ENCODE measurements at regions of chr1 and their contacts with region 1.

Region 1: DNA sequence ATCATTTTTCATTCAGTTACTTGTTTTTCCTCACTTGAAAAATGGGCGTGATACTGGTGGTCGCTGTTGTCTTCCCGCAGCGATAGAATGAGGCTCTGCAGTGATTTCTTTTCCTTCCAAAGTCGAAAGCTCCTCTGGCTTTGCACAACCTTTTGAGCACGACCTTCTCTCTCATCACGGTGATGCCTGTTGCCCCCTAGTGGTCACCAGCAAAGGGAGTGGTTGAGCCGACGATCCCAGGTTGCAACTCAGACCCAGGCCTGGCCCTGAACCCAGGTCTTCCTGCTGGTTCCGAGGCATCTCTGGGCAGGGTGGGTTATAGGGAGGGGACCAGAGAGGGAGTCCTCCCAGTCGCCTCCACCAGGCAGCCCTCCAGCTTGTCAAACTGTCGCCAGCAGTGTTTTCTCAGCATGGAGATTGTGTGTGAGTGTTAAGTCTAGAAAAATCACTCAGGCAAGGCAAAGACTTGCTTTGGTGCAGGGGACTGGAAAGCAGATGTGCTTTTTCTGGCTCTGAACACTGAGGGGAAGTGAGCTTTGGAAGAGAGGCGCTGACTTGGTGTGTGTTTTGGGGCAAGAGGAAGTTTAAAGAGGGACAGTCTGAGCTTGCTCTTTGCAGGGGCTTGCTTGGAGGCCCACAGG is 285.3 kb downstream of the CAMTA1 start:
- DNase-seq: peak; percentile 48 to 73
- ATAC-seq: peak; percentile 67 to 89 (median 72)
- H3K4me3 ChIP-seq: peak overlapping the region; percentile 52
- H3K27ac ChIP-seq: no peak overlapping the region
- H3K4me1 ChIP-seq: peaks cover 6% of the 10 kb centered on the region
- H3K27me3 ChIP-seq: peaks cover 0 to 4% (median 0%) of the 10 kb centered on the region in 3 donors
- CTCF ChIP-seq: peak; percentile 84

Region 2: GRCh38 chr1:6724516-6725141 is 345.9 kb before region 1 on chr1:
- intact Hi-C with region 1: loop called (anchors 2 to 5 kb)
- DNase-seq: no peak
- ATAC-seq: no peak
- H3K4me3 ChIP-seq: no peak overlapping the region
- H3K27ac ChIP-seq: no peak overlapping the region
- H3K4me1 ChIP-seq: peaks cover 3% of the 10 kb centered on the region
- H3K27me3 ChIP-seq: no peaks in the 10 kb centered on the region
- CTCF ChIP-seq: no peak

Region 3: DNA sequence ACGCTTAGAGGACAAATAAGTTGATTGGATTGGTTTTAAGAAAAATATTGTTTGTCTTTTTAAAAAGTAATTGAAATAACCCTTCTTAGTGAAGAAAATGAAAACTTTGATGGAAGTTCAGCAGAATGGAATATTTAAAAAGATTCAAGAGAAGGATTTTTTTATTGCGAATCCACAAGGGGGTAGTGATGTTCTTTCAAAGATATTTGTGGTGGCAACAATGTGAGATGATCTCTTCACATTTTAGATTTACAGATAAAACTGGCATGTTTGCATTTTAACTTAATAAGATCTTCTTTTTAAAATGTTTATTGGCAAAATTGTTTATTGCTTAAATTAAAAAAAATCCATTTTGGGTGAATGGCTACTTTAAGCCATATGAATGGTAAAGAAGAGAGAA is 276.3 kb before region 1 on chr1:
- intact Hi-C with region 1: loop called (anchors 2 to 5 kb)
- DNase-seq: no peak
- ATAC-seq: peak in 1 of 4 donors; percentile 69
- H3K4me3 ChIP-seq: no peak overlapping the region
- H3K27ac ChIP-seq: no peak overlapping the region
- H3K4me1 ChIP-seq: peaks cover 27% of the 10 kb centered on the region
- H3K27me3 ChIP-seq: no peaks in the 10 kb centered on the region
- CTCF ChIP-seq: peak; percentile 53

Region 4: GRCh38 chr1:7086106-7086505 is 15.6 kb after region 1 on chr1:
- intact Hi-C with region 1: loop called in 1 of 2 experiments (anchors 1 kb)
- DNase-seq: no peak
- ATAC-seq: no peak
- H3K4me3 ChIP-seq: no peak overlapping the region
- H3K27ac ChIP-seq: no peak overlapping the region
- H3K4me1 ChIP-seq: no peaks in the 10 kb centered on the region
- H3K27me3 ChIP-seq: no peaks in the 10 kb centered on the region
- CTCF ChIP-seq: no peak

Measured in psoas muscle (tissue), 8 donors.